K562 (cell line): ENCODE measurements at regions of chr12 and their contacts with region 1.

Region 1: GRCh38 chr12:123983822-123984485 is 10.9 kb downstream of the ZNF664 start:
- DNase-seq: peak in 3 of 4 experiments; percentile 38 to 76 (median 38)
- ATAC-seq: peak; percentile 97
- H3K4me3 ChIP-seq: no peak overlapping the region
- H3K27ac ChIP-seq: no peak overlapping the region
- H3K4me1 ChIP-seq: 0 out of 5 replicates have a peak, but pooled peaks cover 0 to 3% of the 10 kb centered on the region in 2 experiments
- H3K27me3 ChIP-seq: no peaks in the 10 kb centered on the region
- CTCF ChIP-seq: peak; percentile 73 to 87 (median 80)
- EP300 ChIP-seq: no peak
- POLR2A ChIP-seq: no peak
- RAD21 ChIP-seq: peak; percentile 85 to 86

Region 2: DNA sequence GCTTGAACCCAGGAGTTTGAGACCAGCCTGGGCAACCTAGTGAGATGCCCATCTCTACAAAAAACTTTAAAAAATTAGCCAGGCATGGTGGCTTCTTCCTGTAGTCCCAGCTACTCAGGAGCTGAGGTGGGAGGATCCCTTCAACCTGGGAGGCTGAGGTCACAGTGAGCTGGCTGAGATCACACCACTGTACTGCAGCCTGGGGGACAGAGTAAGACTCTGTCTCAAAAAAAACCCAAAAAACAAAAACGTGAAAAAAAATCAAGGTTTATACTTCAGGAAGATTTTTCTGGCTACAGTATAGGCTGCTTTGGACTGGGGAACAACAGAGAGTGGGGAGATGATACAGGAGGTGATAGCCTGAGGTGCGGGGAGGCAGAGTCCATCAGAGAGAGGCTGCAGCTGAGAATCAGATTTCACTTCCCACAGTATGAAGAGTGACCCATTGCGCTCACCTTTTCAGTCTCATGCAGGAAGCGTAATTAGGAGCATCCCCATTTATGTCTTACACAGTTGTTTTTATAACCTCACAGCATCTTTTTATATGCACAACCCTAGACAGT is 193.0 kb before region 1 on chr12:
- CTCF ChIA-PET with region 1: no interaction called
- POLR2A ChIA-PET with region 1: no interaction called
- in situ Hi-C with region 1: no loop called
- intact Hi-C with region 1: no loop called
- DNase-seq: no peak
- ATAC-seq: peak; percentile 72
- H3K4me3 ChIP-seq: no peak overlapping the region
- H3K27ac ChIP-seq: no peak overlapping the region
- H3K4me1 ChIP-seq: peaks cover 0 to 7% of the 10 kb centered on the region in 2 experiments; a peak in 2 of 5 replicates
- H3K27me3 ChIP-seq: peaks cover 0 to 1% of the 10 kb centered on the region in 2 experiments; a peak in 1 of 5 replicates
- CTCF ChIP-seq: no peak
- EP300 ChIP-seq: no peak
- POLR2A ChIP-seq: no peak
- RAD21 ChIP-seq: no peak

Region 3: DNA sequence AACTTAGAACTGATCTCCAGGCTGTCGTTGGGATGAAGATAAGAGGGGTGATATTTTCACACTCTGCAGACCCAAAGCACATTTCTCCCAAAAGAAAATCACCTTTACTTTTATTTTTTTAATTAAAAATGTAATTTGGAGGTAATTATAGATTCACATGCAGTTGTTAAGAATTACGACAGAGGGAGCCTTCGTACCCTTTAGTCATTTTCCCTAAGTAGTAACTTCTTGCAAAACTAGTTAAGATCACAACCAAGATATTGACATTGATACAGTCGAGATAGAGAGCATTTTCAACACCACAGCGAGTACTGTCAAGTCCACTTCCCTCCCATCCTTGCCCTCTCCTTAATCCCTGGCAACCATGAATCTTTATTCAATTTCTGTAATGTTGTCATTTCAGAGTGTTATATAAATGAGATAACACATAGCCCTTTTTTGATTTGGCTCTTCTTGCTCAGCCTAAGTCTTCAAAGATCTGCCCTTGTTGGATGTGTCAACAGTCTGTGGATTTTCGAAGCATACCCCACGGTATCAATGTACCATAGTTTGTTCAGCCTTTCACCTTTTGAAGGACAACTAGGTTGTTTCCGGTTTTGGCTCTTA is 182.3 kb before region 1 on chr12:
- CTCF ChIA-PET with region 1: interaction called, 6 read pairs
- POLR2A ChIA-PET with region 1: no interaction called
- in situ Hi-C with region 1: no loop called
- intact Hi-C with region 1: loop called (anchors 2 kb)
- DNase-seq: peak in 1 of 4 experiments; percentile 31
- ATAC-seq: no peak
- H3K4me3 ChIP-seq: no peak overlapping the region
- H3K27ac ChIP-seq: no peak overlapping the region
- H3K4me1 ChIP-seq: no peaks in the 10 kb centered on the region; a peak in 1 of 5 replicates
- H3K27me3 ChIP-seq: peaks cover 11 to 20% of the 10 kb centered on the region in 2 experiments
- CTCF ChIP-seq: peak; percentile 35 to 73 (median 52); a peak in 4 of 6 replicates
- EP300 ChIP-seq: no peak
- POLR2A ChIP-seq: no peak
- RAD21 ChIP-seq: peak; percentile 50 to 77

Region 4: GRCh38 chr12:123905319-123905925 is 78.5 kb before region 1 on chr12:
- CTCF ChIA-PET with region 1: interaction called, 11 read pairs
- POLR2A ChIA-PET with region 1: interaction called, 3 read pairs
- in situ Hi-C with region 1: no loop called
- intact Hi-C with region 1: loop called (anchors 5 kb)
- DNase-seq: peak; percentile 74 to 76 (median 75)
- ATAC-seq: peak; percentile 49
- H3K4me3 ChIP-seq: no peak overlapping the region
- H3K27ac ChIP-seq: no peak overlapping the region
- H3K4me1 ChIP-seq: peaks cover 0 to 4% of the 10 kb centered on the region in 2 experiments; a peak in 1 of 5 replicates
- H3K27me3 ChIP-seq: peaks cover 54 to 68% of the 10 kb centered on the region in 2 experiments; a peak in 4 of 5 replicates
- CTCF ChIP-seq: peak; percentile 71 to 84 (median 78)
- EP300 ChIP-seq: no peak
- POLR2A ChIP-seq: no peak
- RAD21 ChIP-seq: peak; percentile 43 to 66

Region 5: GRCh38 chr12:123995023-123995748 is 11.2 kb after region 1 on chr12:
- CTCF ChIA-PET with region 1: no interaction called
- POLR2A ChIA-PET with region 1: interaction called, 13 read pairs
- in situ Hi-C with region 1: no loop called
- intact Hi-C with region 1: no loop called
- DNase-seq: no peak
- ATAC-seq: no peak
- H3K4me3 ChIP-seq: no peak overlapping the region
- H3K27ac ChIP-seq: no peak overlapping the region
- H3K4me1 ChIP-seq: peaks cover 13 to 74% of the 10 kb centered on the region in 2 experiments
- H3K27me3 ChIP-seq: no peaks in the 10 kb centered on the region
- CTCF ChIP-seq: no peak
- EP300 ChIP-seq: no peak
- POLR2A ChIP-seq: no peak
- RAD21 ChIP-seq: no peak